Posterior vena cava (tissue), 2 donors: ENCODE measurements at regions of chr14 and their contacts with region 1.

Region 1: GRCh38 chr14:104563742-104564615 is 15.6 kb upstream of the C14orf180 start:
- DNase-seq: peak; percentile 91

Region 2: DNA sequence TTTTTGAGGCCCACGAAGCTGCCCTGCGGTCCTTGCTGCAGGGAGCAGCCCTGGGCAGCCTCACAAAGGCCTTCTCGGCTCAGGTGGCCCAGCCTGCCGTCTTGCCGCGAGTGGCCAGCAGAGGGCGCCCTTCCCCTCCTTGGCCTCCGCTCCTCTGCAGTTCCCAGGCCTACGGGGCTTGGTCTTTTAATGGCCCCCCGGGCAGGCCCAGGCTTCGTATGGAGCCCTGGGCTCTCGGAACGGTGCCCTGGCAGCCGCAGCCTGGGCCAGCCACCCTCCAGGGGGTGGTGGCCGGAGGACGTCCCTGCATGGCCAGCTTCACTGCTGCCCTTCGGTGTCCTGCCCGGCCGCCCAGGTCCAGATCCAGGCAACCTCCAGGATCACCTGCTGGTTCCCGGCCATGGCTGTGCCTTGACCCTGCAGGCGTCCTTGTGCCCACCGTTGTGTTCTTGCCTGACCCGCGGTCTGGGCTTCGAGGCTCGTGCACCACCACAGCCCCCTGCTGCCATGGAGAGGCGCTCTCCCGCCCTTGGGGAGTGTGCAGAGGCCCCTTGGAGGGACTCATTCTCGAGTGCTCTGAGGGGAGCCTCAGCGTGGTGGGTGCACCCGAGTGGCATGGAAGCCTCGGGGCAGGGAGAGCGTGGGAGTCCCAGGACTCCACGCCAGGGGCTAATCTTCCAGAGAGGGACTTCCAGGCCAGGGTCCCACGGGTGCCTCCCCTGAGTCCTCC is 469.1 kb before region 1 on chr14:
- intact Hi-C with region 1: loop called in 1 of 2 experiments (anchors 10 kb)
- DNase-seq: peak; percentile 90

Region 3: DNA sequence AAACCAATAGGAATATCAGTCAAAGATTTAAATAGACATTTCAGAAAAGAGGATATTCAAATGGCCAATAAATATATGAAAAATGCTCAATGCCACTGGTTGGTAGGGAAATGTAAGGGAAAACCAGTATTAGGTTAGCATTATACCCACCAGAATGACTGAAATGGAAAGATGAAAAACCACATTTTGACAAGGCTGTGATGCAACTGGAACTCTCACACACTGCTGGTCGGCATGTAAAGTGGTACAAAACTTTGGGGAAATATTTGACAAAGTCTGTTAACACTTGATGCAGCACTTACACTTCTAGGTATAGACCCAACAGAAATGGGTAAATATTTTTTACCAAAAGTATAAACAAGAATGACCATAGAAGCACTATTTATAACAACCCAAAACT is 147.6 kb before region 1 on chr14:
- intact Hi-C with region 1: no loop called
- DNase-seq: no peak

Region 4: DNA sequence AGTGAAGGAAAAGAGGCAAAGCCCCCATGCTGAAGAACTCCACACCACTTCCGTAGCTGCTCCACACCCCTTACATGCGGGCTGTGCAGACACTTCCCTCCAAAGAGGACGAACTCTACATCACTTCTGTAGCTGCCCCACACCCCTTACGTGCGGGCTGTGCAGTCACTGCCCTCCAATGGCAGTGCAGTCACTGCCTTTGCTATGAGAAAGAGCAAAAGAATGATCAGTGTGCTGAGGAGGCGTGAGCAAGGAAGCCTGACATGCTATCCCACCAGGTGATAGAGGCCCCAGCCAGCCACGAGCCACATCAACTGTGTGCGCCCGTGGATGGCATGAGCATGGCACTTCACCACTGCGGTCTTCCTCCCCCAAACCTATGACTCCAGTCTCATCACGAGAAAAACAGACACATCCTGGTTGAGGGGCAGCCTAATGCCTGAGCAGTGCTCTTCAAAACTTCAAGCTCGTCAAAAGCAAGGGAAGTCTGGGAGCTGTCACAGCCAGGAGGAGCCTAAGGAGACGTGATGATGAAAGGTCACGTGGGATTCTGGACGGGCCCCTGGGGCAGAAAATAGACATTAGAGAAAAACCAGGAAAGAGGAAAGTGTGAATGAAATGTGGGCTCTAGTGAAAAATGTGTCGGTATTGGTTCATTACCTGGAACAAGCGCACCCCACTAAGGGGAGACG is 45.2 kb before region 1 on chr14:
- intact Hi-C with region 1: no loop called
- DNase-seq: no peak